AG04450 (cell line): ENCODE measurements at regions of chr19 and their contacts with region 1.

Region 1: DNA sequence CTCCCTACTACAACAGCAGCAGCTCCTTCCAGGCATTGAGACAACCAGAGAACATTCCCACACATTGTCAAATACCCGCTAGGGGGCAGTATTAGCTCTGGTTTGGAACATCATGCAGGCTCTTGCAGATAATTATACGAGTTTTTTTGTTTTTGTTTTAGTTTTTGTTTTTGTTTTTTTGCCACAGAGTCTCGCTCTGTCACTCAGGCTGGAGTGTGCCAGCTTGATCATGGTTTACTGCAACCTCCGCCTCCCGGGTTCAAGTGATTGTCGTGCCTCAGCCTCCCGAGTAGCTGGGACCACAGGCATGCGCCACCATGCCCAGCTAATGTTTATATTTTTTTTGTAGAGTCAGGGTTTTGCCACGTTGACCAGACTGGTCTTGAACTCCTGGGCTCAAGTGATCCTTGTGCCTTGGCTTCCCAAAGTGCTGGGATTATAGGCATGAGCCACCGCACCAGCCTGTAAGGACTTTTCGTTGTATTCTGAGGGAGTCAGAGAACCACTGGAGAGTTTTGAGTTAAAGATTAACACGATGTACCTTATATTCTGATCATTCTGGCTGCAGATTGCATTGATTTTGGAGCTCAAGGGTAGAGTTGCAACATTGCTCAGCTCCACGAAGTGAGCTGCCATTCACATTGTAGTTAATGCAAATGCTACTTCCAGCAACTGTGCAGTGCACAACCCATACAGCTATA is 41.7 kb upstream of the CEACAM20 start:
- DNase-seq: peak; percentile 67
- H3K4me3 ChIP-seq: no peak overlapping the region
- H3K27ac ChIP-seq: no peak overlapping the region
- H3K27me3 ChIP-seq: peaks cover 10% of the 10 kb centered on the region
- CTCF ChIP-seq: peak; percentile 76

Region 2: DNA sequence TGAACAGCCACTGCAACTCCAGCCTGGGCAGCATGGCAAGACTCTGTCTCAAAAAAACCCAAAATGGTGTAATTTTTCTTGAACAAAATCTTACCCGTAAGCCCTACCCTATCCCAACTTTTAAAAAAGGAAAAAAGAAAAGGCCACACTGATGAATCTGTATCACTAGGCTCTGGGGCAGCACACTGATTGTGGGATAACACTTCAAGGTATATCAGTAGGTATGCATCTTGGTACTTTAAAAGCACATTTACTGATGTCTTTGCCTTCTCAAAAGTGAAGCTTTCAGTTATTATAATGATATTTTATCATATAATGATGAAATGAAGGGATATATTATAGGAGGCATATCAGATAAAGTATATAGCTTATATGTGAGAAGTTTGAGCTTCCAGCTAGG is 239.0 kb before region 1 on chr19:
- CTCF ChIA-PET with region 1: no interaction called
- POLR2A ChIA-PET with region 1: no interaction called
- DNase-seq: no peak
- H3K4me3 ChIP-seq: no peak overlapping the region
- H3K27ac ChIP-seq: no peak overlapping the region
- H3K27me3 ChIP-seq: no peaks in the 10 kb centered on the region
- CTCF ChIP-seq: no peak

Region 3: GRCh38 chr19:44582581-44583265 is 11.6 kb after region 1 on chr19:
- CTCF ChIA-PET with region 1: interaction called, 29 read pairs
- POLR2A ChIA-PET with region 1: no interaction called
- DNase-seq: no peak
- H3K4me3 ChIP-seq: no peak overlapping the region
- H3K27ac ChIP-seq: no peak overlapping the region
- H3K27me3 ChIP-seq: no peaks in the 10 kb centered on the region
- CTCF ChIP-seq: peak; percentile 54

Region 4: DNA sequence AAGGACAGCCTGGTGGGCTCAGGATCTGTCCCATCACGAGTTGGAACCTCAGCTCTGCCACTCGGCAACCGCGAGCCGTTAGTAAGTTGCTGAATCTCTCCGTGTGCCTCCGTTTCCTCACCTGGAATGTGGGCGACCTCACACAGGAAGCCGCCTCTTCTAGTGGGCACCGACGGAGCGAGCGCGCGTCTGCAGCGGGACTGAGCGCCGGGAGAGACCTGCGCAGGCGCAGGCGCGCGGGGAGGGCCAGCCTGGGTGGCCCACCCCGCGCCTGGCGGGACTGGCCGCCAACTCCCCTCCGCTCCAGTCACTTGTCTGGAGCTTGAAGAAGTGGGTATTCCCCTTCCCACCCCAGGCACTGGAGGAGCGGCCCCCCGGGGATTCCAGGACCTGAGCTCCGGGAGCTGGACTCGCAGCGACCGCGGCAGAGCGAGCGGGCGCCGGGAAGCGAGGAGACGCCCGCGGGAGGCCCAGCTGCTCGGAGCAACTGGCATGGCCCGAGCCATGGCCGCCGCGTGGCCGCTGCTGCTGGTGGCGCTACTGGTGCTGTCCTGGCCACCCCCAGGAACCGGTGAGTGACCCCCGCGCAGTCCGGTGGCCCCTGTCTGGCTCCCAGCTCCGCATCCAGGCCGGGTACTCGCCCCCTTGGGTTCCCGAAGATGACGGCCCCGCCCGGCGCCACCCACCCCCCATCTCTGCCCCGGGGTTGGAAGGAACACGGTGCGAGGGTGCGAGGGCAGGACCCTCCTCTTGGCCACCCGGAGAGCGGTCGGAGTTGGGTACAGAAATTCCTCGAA is 72.7 kb after region 1 on chr19 and contains the start of gene PVR:
- CTCF ChIA-PET with region 1: interaction called, 15 read pairs
- POLR2A ChIA-PET with region 1: interaction called, 6 read pairs
- DNase-seq: no peak
- H3K4me3 ChIP-seq: peak within 1 kb of the TSS; percentile 96
- H3K27ac ChIP-seq: peak within 1 kb of the TSS; percentile 75
- H3K27me3 ChIP-seq: no peaks in the 10 kb centered on the region
- CTCF ChIP-seq: no peak; the same call in 1 of the 2 replicates
- polyA plus RNA-seq, gene PVR: 125 and 151 TPM in 2 replicates

Region 5: DNA sequence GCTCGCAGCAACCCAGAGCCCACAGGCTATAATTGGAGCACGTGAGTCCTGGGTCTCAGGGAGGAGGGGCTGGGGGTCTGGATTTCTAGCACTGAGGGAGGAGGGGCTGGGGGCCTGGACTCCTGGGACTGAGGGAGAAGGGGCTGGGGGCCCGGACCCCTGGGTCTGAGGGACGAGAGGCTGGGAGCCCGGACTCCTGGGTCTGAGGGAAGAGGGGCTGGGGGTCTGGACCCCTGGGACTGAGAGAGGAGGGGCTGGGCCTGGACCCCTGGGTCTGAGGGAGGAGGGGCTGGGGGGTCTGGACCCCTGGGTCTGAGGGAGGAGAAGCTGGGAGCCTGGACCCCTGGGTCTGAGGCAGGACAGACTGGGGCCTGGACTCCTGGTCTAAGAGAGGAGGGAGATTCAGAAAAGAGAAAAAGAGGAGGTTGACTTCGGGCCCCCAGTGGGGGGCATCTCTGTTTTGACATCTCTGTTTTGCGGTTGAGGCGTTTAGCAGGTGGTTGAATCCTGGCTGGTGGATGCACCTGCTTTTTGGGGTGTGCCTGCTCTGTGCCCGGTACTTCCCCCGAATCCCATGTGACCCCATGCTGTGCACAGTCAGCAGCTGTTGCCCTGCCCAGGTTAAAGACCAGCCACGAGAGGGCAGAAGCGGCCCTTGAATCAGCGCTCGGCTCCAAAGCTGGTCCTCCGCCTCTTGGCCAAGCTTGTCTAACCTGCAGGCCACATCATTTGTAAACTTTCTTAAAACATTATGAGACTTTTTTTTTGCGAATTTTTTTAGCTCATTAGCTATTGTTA is 83.0 kb after region 1 on chr19:
- CTCF ChIA-PET with region 1: interaction called, 95 read pairs
- POLR2A ChIA-PET with region 1: no interaction called
- DNase-seq: no peak
- H3K4me3 ChIP-seq: no peak overlapping the region
- H3K27ac ChIP-seq: peak overlapping the region; percentile 11
- H3K27me3 ChIP-seq: no peaks in the 10 kb centered on the region
- CTCF ChIP-seq: peak; percentile 56

Region 6: DNA sequence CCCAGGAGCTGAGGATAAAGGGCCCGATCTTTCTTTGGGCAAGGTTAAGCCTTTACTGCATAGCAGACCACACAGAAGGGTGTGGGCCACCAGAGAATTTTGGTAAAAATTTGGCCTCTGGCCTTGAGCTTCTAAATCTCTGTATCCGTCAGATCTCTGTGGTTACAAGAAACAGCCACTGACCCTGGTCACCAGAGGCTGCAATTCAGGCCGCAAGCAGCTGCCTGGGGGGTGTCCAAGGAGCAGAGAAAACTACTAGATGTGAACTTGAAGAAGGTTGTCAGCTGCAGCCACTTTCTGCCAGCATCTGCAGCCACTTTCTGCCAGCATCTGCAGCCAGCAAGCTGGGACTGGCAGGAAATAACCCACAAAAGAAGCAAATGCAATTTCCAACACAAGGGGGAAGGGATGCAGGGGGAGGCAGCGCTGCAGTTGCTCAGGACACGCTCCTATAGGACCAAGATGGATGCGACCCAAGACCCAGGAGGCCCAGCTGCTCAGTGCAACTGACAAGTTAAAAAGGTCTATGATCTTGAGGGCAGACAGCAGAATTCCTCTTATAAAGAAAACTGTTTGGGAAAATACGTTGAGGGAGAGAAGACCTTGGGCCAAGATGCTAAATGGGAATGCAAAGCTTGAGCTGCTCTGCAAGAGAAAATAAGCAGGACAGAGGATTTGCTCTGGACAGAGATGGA is 91.7 kb after region 1 on chr19:
- CTCF ChIA-PET with region 1: interaction called, 95 read pairs
- POLR2A ChIA-PET with region 1: no interaction called
- DNase-seq: no peak
- H3K4me3 ChIP-seq: no peak overlapping the region
- H3K27ac ChIP-seq: peak overlapping the region; percentile 11
- H3K27me3 ChIP-seq: no peaks in the 10 kb centered on the region
- CTCF ChIP-seq: no peak

Region 7: DNA sequence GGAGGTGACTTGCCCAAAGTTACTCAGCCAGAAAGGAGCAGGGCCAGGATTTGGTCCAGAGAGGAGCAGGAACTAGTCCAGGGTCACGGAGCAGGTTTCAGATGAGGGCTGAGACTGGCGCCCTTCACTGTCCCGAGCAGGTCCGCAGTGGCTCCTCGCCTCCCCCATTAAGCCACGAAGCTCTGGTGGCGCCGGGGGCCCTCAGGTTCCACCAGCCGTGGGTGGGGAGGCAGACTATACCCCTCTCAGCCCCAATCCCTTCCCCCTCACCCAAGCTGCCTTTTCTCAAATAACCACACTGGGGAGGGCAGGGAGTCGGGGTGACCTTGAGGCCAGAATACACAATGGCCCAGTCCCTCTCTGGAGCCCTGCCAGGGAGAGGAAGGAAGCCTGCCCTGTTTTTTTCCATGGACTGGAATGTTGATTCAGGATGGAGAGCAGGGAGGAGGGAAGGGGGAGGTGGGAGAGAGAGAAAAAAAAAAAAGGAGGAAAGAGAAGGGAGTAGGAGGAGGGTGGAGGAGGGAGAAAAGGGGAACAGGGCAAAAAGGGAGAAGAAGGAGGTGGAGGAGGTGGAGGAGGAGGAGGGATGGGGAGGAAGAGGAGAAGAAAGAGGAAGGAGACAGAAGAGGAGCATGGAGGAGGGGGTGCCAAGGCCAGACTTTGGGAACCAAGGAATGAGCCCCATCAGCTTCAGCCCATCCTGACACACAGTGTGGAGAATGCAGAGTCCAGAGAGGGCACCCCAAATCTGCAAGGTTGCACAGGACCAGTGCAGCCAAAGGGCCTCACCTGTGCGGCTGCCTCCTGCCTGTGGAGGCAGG is 147.5 kb after region 1 on chr19:
- CTCF ChIA-PET with region 1: interaction called, 17 read pairs
- POLR2A ChIA-PET with region 1: no interaction called
- DNase-seq: peak; percentile 7
- H3K4me3 ChIP-seq: no peak overlapping the region
- H3K27ac ChIP-seq: no peak overlapping the region
- H3K27me3 ChIP-seq: no peaks in the 10 kb centered on the region
- CTCF ChIP-seq: no peak